ENCODE measurements at regions of chr16 and their contacts with region 1.

Region 1: DNA sequence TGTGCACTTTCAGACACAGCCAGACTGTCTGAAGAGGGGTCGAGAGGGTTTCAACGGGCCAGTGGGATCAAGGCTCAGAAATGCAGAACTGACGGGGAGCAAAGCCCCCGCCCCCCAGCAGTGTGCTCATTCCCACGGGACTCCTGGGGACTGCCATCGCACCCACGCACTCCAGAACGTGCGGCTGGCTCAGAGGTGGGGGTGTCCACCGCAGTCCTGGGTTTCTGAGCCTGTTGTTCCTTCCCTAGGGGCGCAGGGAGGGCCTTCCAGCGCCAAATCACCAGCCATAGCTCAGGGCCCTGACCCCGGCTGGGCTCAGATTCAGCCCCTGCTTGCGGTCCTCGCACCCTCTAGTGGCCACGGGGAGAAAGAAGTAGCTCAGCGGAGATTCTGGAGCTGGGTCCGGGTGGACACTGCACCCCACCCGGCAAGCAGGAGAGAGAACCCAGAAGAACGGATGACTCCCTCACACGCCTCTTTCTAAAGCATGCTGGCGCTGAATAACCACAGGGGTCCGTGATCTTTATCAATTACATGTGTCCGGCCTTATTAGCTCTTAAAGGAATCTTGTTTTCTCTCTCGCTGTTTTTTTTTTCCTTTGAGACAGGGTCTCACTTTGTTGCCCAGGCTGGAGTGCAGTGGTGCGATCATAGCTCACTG is 45.0 kb upstream of the USP7 start:
- DNase-seq: peak; percentile 50
- ATAC-seq: peak; percentile 91
- H3K4me3 Mint-ChIP-seq: peak overlapping the region; percentile 59
- H3K27ac Mint-ChIP-seq: peak overlapping the region; percentile 53
- H3K4me1 Mint-ChIP-seq: peaks cover 8% of the 10 kb centered on the region
- H3K27me3 Mint-ChIP-seq: peaks cover 29% of the 10 kb centered on the region
- CTCF ChIP-seq: no peak

Region 2: GRCh38 chr16:8572919-8573724 is 435.6 kb before region 1 on chr16:
- CTCF ChIA-PET with region 1: no interaction called
- POLR2A ChIA-PET with region 1: interaction called, 11 read pairs
- intact Hi-C with region 1: no loop called
- DNase-seq: no peak
- ATAC-seq: no peak
- H3K4me3 Mint-ChIP-seq: no peak overlapping the region
- H3K27ac Mint-ChIP-seq: no peak overlapping the region
- H3K4me1 Mint-ChIP-seq: no peaks in the 10 kb centered on the region
- H3K27me3 Mint-ChIP-seq: peaks cover 32% of the 10 kb centered on the region
- CTCF ChIP-seq: no peak

Region 3: DNA sequence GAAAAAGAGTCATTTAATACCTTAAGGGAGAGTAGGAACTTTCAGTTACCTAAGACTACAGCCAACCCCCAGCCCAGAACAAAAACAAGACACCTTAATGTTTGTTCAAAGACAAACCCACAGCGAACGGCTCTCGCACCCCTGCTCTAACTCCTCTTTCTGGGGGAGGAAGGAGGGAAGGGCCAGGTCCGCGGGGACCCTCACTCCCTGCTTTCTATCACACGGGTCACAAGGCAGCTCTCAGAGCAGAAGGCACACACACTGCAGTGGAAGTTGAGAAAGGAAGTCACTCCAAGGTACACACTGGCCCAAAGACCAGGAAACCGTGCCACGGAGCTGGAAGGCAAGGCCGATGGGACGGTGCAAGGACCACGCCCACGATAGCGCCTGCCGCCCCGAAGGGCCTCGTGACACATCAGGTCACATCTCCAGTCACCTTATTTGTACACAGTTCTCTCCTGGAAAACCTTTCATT is 116.6 kb before region 1 on chr16:
- CTCF ChIA-PET with region 1: interaction called, 15 read pairs
- POLR2A ChIA-PET with region 1: interaction called, 17 read pairs
- intact Hi-C with region 1: loop called (anchors 1 kb)
- DNase-seq: peak; percentile 34
- ATAC-seq: peak; percentile 5
- H3K4me3 Mint-ChIP-seq: peak overlapping the region; percentile 68
- H3K27ac Mint-ChIP-seq: peak overlapping the region; percentile 91
- H3K4me1 Mint-ChIP-seq: peaks cover 39% of the 10 kb centered on the region
- H3K27me3 Mint-ChIP-seq: no peaks in the 10 kb centered on the region
- CTCF ChIP-seq: no peak

Region 4: GRCh38 chr16:8936421-8936820 is 72.3 kb before region 1 on chr16:
- CTCF ChIA-PET with region 1: interaction called, 39 read pairs
- POLR2A ChIA-PET with region 1: no interaction called
- intact Hi-C with region 1: loop called (anchors 1 kb)
- DNase-seq: no peak
- ATAC-seq: peak; percentile 98
- H3K4me3 Mint-ChIP-seq: no peak overlapping the region
- H3K27ac Mint-ChIP-seq: peak overlapping the region; percentile 50
- H3K4me1 Mint-ChIP-seq: peaks cover 92% of the 10 kb centered on the region
- H3K27me3 Mint-ChIP-seq: no peaks in the 10 kb centered on the region
- CTCF ChIP-seq: no peak

Region 5: DNA sequence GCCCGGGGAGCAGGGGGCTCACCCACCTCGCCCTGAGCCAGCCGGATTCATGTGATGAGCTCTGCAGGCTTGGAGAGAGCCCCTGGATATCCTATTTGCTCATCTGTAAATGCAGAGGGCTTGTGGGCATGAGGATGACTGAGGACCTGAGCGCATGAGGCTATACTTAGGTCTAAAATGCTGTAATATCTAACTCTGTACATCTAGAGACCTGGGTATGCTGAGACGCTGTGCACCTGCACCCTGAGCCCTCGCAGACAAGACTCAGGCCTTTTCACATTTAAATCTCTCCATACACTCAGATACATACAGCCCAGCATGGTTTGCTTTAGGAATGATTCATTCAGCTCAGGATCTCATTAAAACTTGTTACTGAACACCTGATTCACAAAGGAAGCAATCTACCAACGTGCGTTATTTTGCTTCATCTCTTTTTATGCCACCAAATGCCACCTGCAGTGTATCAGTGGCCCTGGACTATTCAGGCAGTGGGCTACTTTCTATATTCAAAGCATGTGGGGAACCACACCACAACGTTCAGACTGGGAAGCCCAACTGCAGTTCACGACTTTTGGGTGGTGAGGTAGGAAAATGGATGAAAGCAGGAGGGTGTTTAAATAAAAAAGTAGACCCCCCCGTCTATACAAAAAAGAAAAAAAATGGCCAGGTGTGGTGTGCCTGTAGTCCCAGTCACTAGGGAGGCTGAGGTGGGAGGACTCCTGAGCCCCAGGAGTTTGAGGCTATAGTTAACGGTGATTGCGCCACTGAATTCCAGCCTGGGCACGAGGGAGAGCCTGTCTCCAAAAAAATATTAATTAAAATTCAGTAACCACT is 57.1 kb before region 1 on chr16:
- CTCF ChIA-PET with region 1: no interaction called
- POLR2A ChIA-PET with region 1: no interaction called
- intact Hi-C with region 1: no loop called
- DNase-seq: no peak
- ATAC-seq: peak; percentile 67
- H3K4me3 Mint-ChIP-seq: peak overlapping the region; percentile 55
- H3K27ac Mint-ChIP-seq: peak overlapping the region; percentile 36
- H3K4me1 Mint-ChIP-seq: peaks cover 88% of the 10 kb centered on the region
- H3K27me3 Mint-ChIP-seq: no peaks in the 10 kb centered on the region
- CTCF ChIP-seq: no peak

Region 6: GRCh38 chr16:8963825-8964441 is 44.8 kb before region 1 on chr16 and contains the start of gene USP7:
- CTCF ChIA-PET with region 1: interaction called, 6 read pairs
- POLR2A ChIA-PET with region 1: interaction called, 6 read pairs
- intact Hi-C with region 1: loop called (anchors 1 kb)
- DNase-seq: peak; percentile 90
- ATAC-seq: peak; percentile 90
- H3K4me3 Mint-ChIP-seq: peak within 1 kb of the TSS; percentile 81
- H3K27ac Mint-ChIP-seq: peak within 1 kb of the TSS; percentile 93
- H3K4me1 Mint-ChIP-seq: peaks cover 35% of the 10 kb centered on the region
- H3K27me3 Mint-ChIP-seq: no peaks in the 10 kb centered on the region
- CTCF ChIP-seq: no peak
- total RNA-seq, gene USP7: 173 and 193 TPM in 2 replicates

Region 7: DNA sequence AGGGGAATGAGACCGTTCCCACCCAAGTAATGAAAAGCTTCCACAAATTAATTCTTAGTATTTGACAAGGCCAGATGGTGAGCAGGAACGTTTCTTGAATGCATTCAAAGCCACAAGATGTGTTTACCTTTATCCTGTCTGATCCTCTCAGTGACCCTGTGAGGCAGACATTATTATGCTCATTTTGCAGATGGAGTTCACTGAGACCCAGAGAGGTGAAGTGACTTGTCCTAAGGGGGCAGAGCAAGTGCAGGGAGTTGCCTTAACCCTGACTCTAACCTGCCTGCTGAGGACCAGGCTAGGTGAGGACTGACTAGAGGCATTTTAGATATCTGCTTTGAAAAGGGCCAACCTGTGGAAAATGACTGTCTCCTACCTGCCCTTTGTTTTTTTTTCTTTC is 239.4 kb after region 1 on chr16:
- CTCF ChIA-PET with region 1: no interaction called
- POLR2A ChIA-PET with region 1: no interaction called
- intact Hi-C with region 1: no loop called
- DNase-seq: no peak
- ATAC-seq: no peak
- H3K4me3 Mint-ChIP-seq: no peak overlapping the region
- H3K27ac Mint-ChIP-seq: no peak overlapping the region
- H3K4me1 Mint-ChIP-seq: no peaks in the 10 kb centered on the region
- H3K27me3 Mint-ChIP-seq: peaks cover 13% of the 10 kb centered on the region
- CTCF ChIP-seq: no peak